Activated B cell treated with CpG ODN at 0.5 μM for 24 hours (primary cell): ENCODE measurements at regions of chr14 and their contacts with region 1.

Region 1: DNA sequence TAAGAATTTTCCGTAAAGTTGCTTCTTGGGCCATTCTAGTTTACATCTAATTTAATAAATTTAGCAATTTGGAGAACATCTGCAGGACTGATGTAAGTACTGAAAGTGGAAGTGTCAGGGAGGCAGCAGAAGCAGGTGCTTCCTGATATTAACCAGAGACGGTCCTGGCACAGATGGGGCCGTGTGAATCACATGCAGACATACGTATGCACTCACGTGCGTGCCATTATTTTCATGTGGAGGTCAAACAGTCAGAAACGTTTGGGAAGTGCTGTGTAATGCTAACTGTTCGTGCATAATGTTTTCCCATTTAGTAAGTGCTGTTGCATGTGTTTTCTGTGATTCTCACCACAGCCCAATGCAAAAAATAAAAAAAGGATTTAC is 87.8 kb upstream of the DYNC1H1 start:
- DNase-seq: peak; percentile 60
- ATAC-seq: peak; percentile 84
- H3K4me3 Mint-ChIP-seq: peak overlapping the region; percentile 72
- H3K27ac Mint-ChIP-seq: peak overlapping the region; percentile 96
- H3K4me1 Mint-ChIP-seq: peaks cover 84% of the 10 kb centered on the region
- H3K27me3 Mint-ChIP-seq: no peaks in the 10 kb centered on the region
- CTCF ChIP-seq: no peak

Region 2: DNA sequence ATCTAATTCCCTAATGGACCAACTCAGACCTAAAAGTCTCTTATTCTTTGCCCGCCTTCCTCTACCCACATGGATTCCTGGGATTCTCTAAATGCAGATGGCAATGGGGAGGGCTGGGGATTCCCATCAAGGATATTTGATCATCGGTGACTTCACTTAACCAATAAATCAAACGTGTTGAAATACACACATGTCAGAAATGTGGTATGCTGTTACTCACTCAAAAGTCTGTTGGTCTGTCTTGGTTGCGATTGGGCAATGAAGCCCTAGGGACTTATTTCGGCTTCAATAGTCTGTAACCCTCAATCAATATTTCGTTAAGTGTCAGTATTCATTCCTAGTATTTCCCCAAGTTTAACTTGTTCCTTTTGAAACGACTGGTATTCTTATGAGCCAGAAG is 432.4 kb before region 1 on chr14:
- CTCF ChIA-PET with region 1: no interaction called
- POLR2A ChIA-PET with region 1: no interaction called
- intact Hi-C with region 1: no loop called
- DNase-seq: no peak
- ATAC-seq: no peak
- H3K4me3 Mint-ChIP-seq: no peak overlapping the region
- H3K27ac Mint-ChIP-seq: no peak overlapping the region
- H3K4me1 Mint-ChIP-seq: no peaks in the 10 kb centered on the region
- H3K27me3 Mint-ChIP-seq: peaks cover 10% of the 10 kb centered on the region
- CTCF ChIP-seq: no peak

Region 3: DNA sequence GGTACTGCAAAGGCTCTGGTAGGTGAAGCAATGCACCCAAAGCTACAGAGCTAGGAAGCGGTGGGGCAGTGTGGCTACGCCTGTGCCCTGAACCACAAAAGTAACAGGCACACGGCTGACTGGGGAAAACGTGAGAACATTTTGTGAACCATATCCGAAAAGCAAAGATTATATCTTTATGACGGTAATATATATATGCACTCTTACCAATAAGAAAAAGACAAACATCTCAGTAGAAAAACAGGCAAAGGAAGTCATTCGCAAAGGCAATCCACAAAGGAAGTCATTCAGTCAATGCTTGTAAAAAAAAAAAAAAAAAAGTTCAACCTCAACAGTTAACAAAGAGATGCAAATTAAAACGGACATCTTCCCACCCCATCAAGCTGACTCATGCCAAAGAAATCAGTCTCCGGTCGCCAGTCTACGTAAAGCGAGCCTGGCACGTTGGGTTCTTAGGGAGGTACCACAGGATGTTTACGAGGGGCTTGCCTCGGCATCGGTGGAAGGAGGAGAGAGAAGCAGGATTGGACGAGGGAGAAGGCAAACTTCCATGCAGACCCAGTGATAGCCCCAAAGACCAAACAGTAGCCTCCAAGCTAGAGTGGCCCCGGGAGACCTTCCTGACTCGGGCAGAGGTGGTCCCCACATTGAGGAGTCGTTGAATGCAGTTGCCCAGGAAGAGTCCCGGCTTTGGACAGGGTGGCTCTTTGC is 154.4 kb before region 1 on chr14:
- CTCF ChIA-PET with region 1: no interaction called
- POLR2A ChIA-PET with region 1: no interaction called
- intact Hi-C with region 1: loop called (anchors 5 kb)
- DNase-seq: no peak
- ATAC-seq: peak; percentile 83
- H3K4me3 Mint-ChIP-seq: peak overlapping the region; percentile 54
- H3K27ac Mint-ChIP-seq: no peak overlapping the region
- H3K4me1 Mint-ChIP-seq: peaks cover 12% of the 10 kb centered on the region
- H3K27me3 Mint-ChIP-seq: peaks cover 11% of the 10 kb centered on the region
- CTCF ChIP-seq: no peak

Region 4: GRCh38 chr14:101774006-101774795 is 102.3 kb before region 1 on chr14:
- CTCF ChIA-PET with region 1: interaction called, 5 read pairs
- POLR2A ChIA-PET with region 1: no interaction called
- intact Hi-C with region 1: loop called (anchors 1 kb)
- DNase-seq: peak; percentile 42
- ATAC-seq: peak; percentile 79
- H3K4me3 Mint-ChIP-seq: peak overlapping the region; percentile 49
- H3K27ac Mint-ChIP-seq: peak overlapping the region; percentile 81
- H3K4me1 Mint-ChIP-seq: peaks cover 58% of the 10 kb centered on the region
- H3K27me3 Mint-ChIP-seq: no peaks in the 10 kb centered on the region
- CTCF ChIP-seq: no peak

Region 5: DNA sequence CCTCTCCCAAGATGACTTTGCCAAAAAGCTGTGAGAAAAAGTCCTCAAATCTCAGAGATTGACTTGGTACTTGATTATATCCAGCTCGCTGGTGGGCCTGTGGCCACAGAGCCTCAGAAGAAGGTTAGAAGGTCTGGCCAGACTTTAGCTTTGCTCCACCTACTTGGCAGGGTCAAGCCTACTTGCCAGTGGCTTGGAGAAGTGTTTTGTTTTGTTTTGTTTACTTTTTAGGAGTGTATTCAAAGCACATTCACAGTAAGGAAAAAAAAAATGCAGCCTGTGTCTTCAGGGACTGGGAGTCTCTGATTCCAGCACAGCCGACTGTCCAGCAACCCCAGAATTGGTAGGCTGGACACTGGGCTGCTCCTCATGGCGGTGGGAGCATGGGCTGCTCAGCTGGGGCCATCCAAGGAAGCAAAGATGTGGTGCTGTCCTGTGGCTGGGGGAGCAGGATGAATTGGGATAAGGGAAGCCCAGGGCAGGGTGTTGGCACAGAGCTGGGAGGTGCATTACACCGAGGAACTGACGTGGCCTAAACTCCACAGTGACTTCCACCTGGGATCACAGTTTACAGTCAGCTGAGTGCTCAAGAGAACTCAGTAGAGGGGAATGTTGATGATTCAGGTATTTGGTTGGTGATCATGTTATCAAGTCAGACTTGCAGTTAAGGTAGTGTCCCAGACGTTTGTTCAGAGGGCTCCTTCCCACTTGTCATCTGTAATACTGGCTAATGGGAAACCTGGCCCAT is 41.6 kb before region 1 on chr14:
- CTCF ChIA-PET with region 1: no interaction called
- POLR2A ChIA-PET with region 1: interaction called, 10 read pairs
- intact Hi-C with region 1: loop called (anchors 1 kb)
- DNase-seq: no peak
- ATAC-seq: no peak
- H3K4me3 Mint-ChIP-seq: no peak overlapping the region
- H3K27ac Mint-ChIP-seq: peak overlapping the region; percentile 46
- H3K4me1 Mint-ChIP-seq: peaks cover 70% of the 10 kb centered on the region
- H3K27me3 Mint-ChIP-seq: no peaks in the 10 kb centered on the region
- CTCF ChIP-seq: no peak

Region 6: GRCh38 chr14:101947906-101948665 is 71.5 kb after region 1 on chr14:
- CTCF ChIA-PET with region 1: no interaction called
- POLR2A ChIA-PET with region 1: interaction called, 3 read pairs
- intact Hi-C with region 1: loop called (anchors 1 kb)
- DNase-seq: peak; percentile 98
- ATAC-seq: peak; percentile 95
- H3K4me3 Mint-ChIP-seq: peak overlapping the region; percentile 93
- H3K27ac Mint-ChIP-seq: peak overlapping the region; percentile 97
- H3K4me1 Mint-ChIP-seq: peaks cover 19% of the 10 kb centered on the region
- H3K27me3 Mint-ChIP-seq: peaks cover 22% of the 10 kb centered on the region
- CTCF ChIP-seq: no peak

Region 7: DNA sequence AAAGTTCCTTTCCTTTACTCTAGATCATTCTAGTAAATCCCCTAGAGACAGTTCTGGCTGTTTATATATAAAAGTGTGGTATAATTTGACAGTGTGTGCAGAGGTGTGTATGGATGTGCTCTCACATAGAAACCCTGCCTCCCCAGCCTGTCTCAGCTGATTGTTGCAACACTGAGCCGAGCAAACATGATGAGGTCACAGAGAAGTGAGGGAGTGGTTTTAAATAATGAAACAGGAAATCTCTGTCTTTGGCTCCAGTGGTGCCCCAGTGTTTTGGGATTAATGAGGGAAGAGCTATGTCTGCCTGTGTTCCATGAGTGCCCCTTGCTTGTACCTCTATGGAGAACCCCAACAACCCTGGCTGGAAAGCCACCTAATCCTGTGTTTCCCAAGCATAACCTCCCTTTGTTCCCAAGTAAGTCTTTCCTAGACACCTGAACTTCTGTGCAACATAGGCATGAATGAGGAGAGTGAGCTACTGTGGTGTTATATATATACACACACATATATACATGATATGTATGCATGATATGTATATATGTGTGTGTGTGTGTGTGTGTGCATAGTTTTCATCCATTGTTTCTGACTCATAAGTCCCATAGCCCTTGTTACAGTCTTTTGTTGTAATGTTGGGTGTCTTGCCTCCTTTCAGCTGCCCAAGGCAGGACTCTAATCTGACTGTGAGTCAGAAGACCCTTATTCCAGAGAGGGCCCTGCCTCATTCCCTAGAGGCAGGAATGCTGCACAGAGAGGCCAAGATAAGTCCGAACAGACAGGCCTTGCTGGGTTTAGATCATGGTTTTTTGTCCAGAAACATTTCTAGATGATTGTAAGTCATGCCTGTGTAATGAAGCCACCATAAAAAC is 918.7 kb after region 1 on chr14:
- CTCF ChIA-PET with region 1: no interaction called
- POLR2A ChIA-PET with region 1: no interaction called
- intact Hi-C with region 1: no loop called
- DNase-seq: no peak
- ATAC-seq: peak; percentile 72
- H3K4me3 Mint-ChIP-seq: peak overlapping the region; percentile 47
- H3K27ac Mint-ChIP-seq: peak overlapping the region; percentile 79
- H3K4me1 Mint-ChIP-seq: peaks cover 85% of the 10 kb centered on the region
- H3K27me3 Mint-ChIP-seq: no peaks in the 10 kb centered on the region
- CTCF ChIP-seq: no peak